A673 (cell line): ENCODE measurements at regions of chr12 and their contacts with region 1.

Region 1: DNA sequence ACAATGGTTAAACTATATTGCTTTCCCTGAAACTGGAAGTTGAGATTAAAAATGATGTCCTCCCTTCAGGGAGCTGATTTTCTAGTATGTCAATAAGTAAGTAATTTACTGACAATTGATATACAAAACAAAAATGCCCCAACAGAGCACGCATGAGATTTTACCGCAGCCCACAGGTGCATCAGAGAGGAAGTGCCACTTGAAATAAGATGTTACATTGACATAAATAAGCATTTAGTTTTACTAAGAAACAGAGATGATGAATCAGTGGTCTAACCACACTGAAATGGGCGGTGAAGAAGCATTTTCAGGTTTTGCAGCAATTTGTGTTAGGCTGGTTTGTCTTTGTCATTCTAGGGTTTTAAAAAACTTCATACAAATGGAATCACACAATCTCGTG is 8.8 kb upstream of the CLECL1 start:
- DNase-seq: no peak
- H3K4me3 ChIP-seq: no peak overlapping the region
- H3K27ac ChIP-seq: no peak overlapping the region
- H3K4me1 ChIP-seq: no peaks in the 10 kb centered on the region
- H3K27me3 ChIP-seq: no peaks in the 10 kb centered on the region
- CTCF ChIP-seq: no peak

Region 2: GRCh38 chr12:9920451-9920850 is 178.7 kb after region 1 on chr12:
- CTCF ChIA-PET with region 1: no interaction called
- POLR2A ChIA-PET with region 1: no interaction called
- intact Hi-C with region 1: no loop called
- DNase-seq: no peak
- H3K4me3 ChIP-seq: no peak overlapping the region
- H3K27ac ChIP-seq: no peak overlapping the region
- H3K4me1 ChIP-seq: no peaks in the 10 kb centered on the region
- H3K27me3 ChIP-seq: no peaks in the 10 kb centered on the region
- CTCF ChIP-seq: no peak

Region 3: GRCh38 chr12:10016881-10017280 is 275.2 kb after region 1 on chr12:
- CTCF ChIA-PET with region 1: no interaction called
- POLR2A ChIA-PET with region 1: no interaction called
- intact Hi-C with region 1: loop called (anchors 10 kb)
- DNase-seq: peak; percentile 21
- H3K4me3 ChIP-seq: no peak overlapping the region
- H3K27ac ChIP-seq: no peak overlapping the region
- H3K4me1 ChIP-seq: peaks cover 13% of the 10 kb centered on the region
- H3K27me3 ChIP-seq: peaks cover 3% of the 10 kb centered on the region
- CTCF ChIP-seq: no peak